ENCODE measurements at regions of chr6 and their contacts with region 1.

Region 1: DNA sequence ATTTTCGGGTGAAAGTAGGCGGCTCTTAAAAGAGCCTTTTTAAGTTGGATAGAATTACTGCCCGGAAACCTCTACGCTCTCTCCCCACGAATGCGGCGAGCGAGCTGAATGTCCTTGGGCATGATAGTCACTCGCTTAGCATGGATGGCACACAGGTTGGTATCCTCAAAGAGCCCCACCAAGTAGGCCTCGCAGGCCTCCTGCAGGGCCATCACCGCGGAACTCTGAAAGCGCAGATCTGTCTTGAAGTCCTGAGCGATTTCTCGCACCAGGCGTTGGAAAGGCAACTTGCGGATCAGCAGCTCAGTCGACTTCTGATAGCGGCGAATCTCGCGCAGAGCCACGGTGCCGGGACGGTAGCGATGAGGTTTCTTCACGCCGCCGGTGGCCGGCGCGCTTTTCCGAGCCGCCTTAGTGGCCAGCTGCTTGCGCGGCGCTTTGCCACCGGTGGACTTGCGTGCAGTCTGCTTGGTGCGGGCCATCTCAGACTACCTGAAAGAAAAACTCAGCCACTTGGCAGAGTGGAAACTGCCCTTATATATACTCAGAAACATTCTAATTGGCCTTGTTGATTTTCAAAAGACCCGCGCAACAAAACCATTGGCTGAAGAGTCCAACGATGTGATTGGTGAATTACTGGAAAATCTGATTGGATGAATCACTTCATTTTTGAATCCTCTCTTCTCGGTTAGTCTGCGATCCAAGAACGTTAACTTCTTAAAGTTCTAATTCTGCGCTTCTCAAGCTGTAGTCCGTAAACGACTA is 93.9 kb upstream of the BTN3A2 start:
- DNase-seq: peak in 1 of 2 experiments; percentile 85
- H3K4me3 ChIP-seq: peak overlapping the region; percentile 73 to 97 (median 88)
- H3K27ac ChIP-seq: peak overlapping the region; percentile 93
- H3K4me1 ChIP-seq: peaks cover 0 to 10% (median 4%) of the 10 kb centered on the region in 4 experiments; a peak in 4 of 7 replicates
- H3K27me3 ChIP-seq: no peaks in the 10 kb centered on the region
- CTCF ChIP-seq: no peak
- EP300 ChIP-seq: no peak
- POLR2A ChIP-seq: peak; percentile 94 to 100
- RAD21 ChIP-seq: no peak

Region 2: GRCh38 chr6:26031595-26032339 is 239.3 kb before region 1 on chr6:
- CTCF ChIA-PET with region 1: no interaction called
- POLR2A ChIA-PET with region 1: interaction called, 107 read pairs
- DNase-seq: peak; percentile 82 to 88
- H3K4me3 ChIP-seq: peak overlapping the region; percentile 81 to 95 (median 92)
- H3K27ac ChIP-seq: peak overlapping the region; percentile 96
- H3K4me1 ChIP-seq: peaks cover 2 to 18% (median 13%) of the 10 kb centered on the region in 4 experiments; a peak in 5 of 7 replicates
- H3K27me3 ChIP-seq: no peaks in the 10 kb centered on the region
- CTCF ChIP-seq: no peak
- EP300 ChIP-seq: peak in 1 of 2 experiments; percentile 2; a peak in 1 of 3 replicates
- POLR2A ChIP-seq: peak; percentile 99 to 100
- RAD21 ChIP-seq: no peak

Region 3: DNA sequence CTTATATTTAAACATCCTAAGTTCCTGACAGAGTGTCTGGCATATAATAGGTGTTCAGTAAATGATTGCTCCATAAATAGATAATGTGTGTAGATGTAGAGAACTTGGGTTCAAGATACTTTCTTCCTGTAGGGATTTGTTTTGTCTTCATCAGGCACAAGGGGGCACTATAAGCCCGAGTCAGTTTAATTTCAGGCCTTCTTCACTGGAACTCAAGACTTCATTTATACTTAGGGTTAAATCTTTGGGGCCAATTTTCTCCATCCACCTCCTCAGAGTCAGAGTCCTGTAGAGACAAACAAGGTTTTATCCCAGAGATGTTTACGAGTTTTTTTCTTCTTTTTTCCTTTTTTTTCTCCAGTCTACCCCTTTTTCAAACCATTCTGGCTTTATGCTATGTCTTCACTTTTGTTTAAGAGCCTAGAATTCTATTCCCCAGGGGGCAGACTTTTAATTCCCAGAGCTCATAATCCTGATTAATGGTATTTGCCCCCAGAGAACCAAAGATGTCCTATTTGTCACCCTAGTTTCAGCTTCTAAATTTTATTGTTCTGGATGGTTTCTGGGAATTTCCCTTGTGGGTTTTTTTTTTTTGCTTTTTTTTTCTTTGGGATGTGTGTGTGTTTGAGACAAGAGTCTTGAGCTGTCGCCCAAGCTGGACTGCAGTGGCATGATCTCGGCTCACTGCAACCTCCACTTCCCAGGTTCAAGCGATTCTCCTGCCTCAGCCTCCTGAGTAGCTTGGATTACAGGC is 95.5 kb before region 1 on chr6:
- CTCF ChIA-PET with region 1: interaction called, 5 read pairs
- POLR2A ChIA-PET with region 1: interaction called, 21 read pairs
- DNase-seq: peak in 1 of 2 experiments; percentile 54
- H3K4me3 ChIP-seq: 0 out of 8 replicates have a peak overlapping the region, but pooled peaks of 1 of the 4 experiments have one; percentile 14
- H3K27ac ChIP-seq: no peak overlapping the region
- H3K4me1 ChIP-seq: peaks cover 0 to 2% (median 0%) of the 10 kb centered on the region in 4 experiments; a peak in 3 of 7 replicates
- H3K27me3 ChIP-seq: no peaks in the 10 kb centered on the region
- CTCF ChIP-seq: peak in 2 of 3 experiments; percentile 51 to 65; a peak in 2 of 4 replicates
- EP300 ChIP-seq: no peak
- POLR2A ChIP-seq: no peak
- RAD21 ChIP-seq: peak; percentile 79 to 83

Region 4: GRCh38 chr6:26234421-26235296 is 36.4 kb before region 1 on chr6:
- CTCF ChIA-PET with region 1: interaction called, 4 read pairs
- POLR2A ChIA-PET with region 1: interaction called, 347 read pairs
- DNase-seq: peak in 1 of 2 experiments; percentile 85
- H3K4me3 ChIP-seq: peak overlapping the region; percentile 83 to 91 (median 88)
- H3K27ac ChIP-seq: peak overlapping the region; percentile 93
- H3K4me1 ChIP-seq: peaks cover 0 to 3% (median 0%) of the 10 kb centered on the region in 4 experiments; a peak in 3 of 7 replicates
- H3K27me3 ChIP-seq: no peaks in the 10 kb centered on the region
- CTCF ChIP-seq: no peak
- EP300 ChIP-seq: no peak
- POLR2A ChIP-seq: peak; percentile 86
- RAD21 ChIP-seq: no peak

Region 5: DNA sequence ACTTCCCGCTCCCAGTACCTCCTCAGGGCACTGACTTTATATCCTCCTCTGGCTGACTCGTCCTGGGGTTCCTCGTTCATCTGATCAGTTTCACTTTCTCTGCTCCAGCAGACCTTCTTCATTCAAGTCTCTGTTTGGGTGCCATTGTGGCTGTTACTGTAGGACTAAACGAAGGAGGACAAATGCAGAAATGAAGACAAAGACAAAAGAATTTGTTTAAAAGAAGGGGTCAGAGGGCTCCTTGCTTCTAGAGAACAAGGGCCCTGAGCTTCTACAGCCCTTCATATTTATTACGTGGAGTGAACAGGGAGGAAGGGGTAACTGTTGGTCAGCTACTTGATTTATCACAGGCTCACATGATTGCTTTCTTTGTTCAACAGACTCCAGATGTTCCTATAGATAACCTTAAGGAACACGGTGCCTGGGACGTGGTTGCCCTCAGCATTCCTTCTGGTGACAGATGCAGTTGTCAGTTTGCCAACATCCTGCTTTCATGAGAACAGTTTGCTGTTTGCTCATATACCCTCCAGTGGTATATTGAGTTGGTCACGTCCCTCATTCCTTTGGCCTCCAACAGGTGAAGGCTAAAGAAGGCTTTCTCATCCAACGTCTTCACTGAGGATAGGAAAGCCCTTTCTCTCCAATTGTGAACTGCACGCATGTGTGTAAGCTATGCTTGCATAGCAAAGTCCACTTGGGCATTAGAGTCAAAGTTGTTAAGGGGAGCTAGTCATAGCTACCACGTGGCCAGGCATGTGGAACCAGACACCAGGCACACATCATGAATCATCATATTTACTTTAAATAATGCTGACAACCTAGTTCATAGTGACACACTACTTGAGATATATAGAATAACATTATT is 24.8 kb after region 1 on chr6:
- CTCF ChIA-PET with region 1: no interaction called
- POLR2A ChIA-PET with region 1: interaction called, 52 read pairs
- DNase-seq: no peak
- H3K4me3 ChIP-seq: no peak overlapping the region
- H3K27ac ChIP-seq: no peak overlapping the region
- H3K4me1 ChIP-seq: peaks cover 0 to 4% (median 0%) of the 10 kb centered on the region in 4 experiments; a peak in 1 of 7 replicates
- H3K27me3 ChIP-seq: peaks cover 0 to 1% (median 0%) of the 10 kb centered on the region in 4 experiments; a peak in 1 of 7 replicates
- CTCF ChIP-seq: no peak
- EP300 ChIP-seq: no peak
- POLR2A ChIP-seq: no peak
- RAD21 ChIP-seq: no peak

Region 6: DNA sequence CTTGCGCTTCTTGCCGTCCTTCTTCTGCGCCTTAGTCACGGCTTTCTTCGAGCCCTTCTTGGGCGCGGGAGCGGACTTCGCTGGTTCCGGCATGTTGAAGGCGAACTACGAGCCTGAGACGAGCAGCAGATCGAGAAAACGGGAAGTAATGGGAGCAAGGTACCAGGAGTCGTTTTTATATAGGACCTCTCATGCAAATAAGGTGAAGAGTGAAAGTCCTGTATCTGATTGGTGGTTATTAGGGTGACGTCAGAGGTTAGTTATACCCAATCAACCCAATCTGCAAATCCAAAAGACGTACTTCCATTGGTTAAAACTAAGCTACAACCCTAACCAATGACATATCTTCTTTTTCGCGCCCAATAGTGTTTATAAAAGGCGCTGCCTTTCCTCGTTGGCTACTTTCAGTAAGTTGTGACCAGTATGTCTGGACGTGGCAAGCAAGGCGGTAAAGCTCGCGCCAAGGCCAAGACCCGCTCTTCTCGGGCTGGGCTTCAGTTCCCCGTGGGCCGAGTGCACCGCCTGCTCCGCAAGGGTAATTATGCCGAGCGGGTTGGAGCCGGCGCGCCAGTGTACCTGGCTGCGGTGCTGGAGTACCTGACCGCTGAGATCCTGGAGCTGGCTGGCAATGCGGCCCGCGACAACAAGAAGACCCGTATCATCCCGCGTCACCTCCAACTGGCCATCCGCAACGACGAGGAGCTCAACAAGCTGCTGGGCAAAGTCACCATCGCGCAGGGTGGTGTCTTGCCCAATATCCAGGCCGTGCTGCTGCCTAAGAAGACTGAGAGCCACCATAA is 875.8 kb after region 1 on chr6:
- CTCF ChIA-PET with region 1: no interaction called
- POLR2A ChIA-PET with region 1: interaction called, 86 read pairs
- DNase-seq: peak; percentile 89 to 93
- H3K4me3 ChIP-seq: peak overlapping the region; percentile 60 to 86 (median 76)
- H3K27ac ChIP-seq: peak overlapping the region; percentile 98
- H3K4me1 ChIP-seq: peaks cover 0 to 11% (median 1%) of the 10 kb centered on the region in 4 experiments; a peak in 4 of 7 replicates
- H3K27me3 ChIP-seq: no peaks in the 10 kb centered on the region
- CTCF ChIP-seq: no peak
- EP300 ChIP-seq: 0 out of 3 replicates have a peak, but pooled peaks of 1 of the 2 experiments have one; percentile 16
- POLR2A ChIP-seq: peak; percentile 98 to 99
- RAD21 ChIP-seq: no peak